ENCODE measurements at regions of chr1 and their contacts with region 1.

Region 1: DNA sequence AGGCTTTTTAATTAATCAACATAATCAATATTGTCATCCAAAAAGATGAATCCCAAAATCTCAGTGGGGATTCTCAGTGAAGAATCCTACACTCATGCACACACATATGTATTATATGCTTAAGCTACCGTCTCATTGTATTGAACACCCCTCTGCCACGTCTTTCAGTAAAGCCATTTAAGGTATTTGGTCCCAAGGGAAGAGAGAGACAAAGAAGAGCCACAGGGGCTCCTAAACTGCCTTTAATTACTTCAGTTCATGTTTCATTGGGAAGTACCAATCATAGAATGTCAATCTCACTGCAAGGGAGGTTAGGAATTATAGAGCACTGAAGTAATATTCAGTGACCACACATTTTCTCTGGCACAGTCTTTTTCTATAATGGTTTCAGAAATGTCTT is 388.6 kb upstream of the NEGR1 start:
- DNase-seq: no peak
- ATAC-seq: no peak
- H3K4me3 ChIP-seq: no peak overlapping the region
- H3K27ac ChIP-seq: no peak overlapping the region
- H3K4me1 ChIP-seq: no peaks in the 10 kb centered on the region
- H3K27me3 ChIP-seq: no peaks in the 10 kb centered on the region
- CTCF ChIP-seq: no peak
- EP300 ChIP-seq: no peak
- POLR2A ChIP-seq: no peak
- RAD21 ChIP-seq: no peak

Region 2: GRCh38 chr1:72516264-72516663 is 154.6 kb before region 1 on chr1:
- CTCF ChIA-PET with region 1: no interaction called
- POLR2A ChIA-PET with region 1: no interaction called
- in situ Hi-C with region 1: no loop called
- intact Hi-C with region 1: no loop called
- DNase-seq: no peak
- ATAC-seq: no peak
- H3K4me3 ChIP-seq: no peak overlapping the region
- H3K27ac ChIP-seq: no peak overlapping the region
- H3K4me1 ChIP-seq: no peaks in the 10 kb centered on the region
- H3K27me3 ChIP-seq: no peaks in the 10 kb centered on the region
- CTCF ChIP-seq: no peak
- EP300 ChIP-seq: no peak
- POLR2A ChIP-seq: no peak
- RAD21 ChIP-seq: no peak

Region 3: GRCh38 chr1:73980324-73981040 is 1309.6 kb after region 1 on chr1:
- CTCF ChIA-PET with region 1: no interaction called
- POLR2A ChIA-PET with region 1: no interaction called
- in situ Hi-C with region 1: no loop called
- intact Hi-C with region 1: loop called (anchors 5 kb)
- DNase-seq: peak; percentile 3
- ATAC-seq: no peak
- H3K4me3 ChIP-seq: no peak overlapping the region
- H3K27ac ChIP-seq: no peak overlapping the region
- H3K4me1 ChIP-seq: no peaks in the 10 kb centered on the region
- H3K27me3 ChIP-seq: no peaks in the 10 kb centered on the region; a peak in 1 of 5 replicates
- CTCF ChIP-seq: no peak
- EP300 ChIP-seq: no peak
- POLR2A ChIP-seq: no peak
- RAD21 ChIP-seq: no peak

Measured in HepG2 (cell line).